Activated naive CD4-positive, alpha-beta T cell treated with anti-CD3 and anti-CD28 coated beads for 36 hours (primary cell): ENCODE measurements at regions of chr3 and their contacts with region 1.

Region 1: GRCh38 chr3:59935025-59935424 is 885.2 kb upstream of the CFAP20DC start:
- DNase-seq: peak; percentile 53
- H3K4me3 Mint-ChIP-seq: peak overlapping the region; percentile 50
- H3K27ac Mint-ChIP-seq: peak overlapping the region; percentile 78
- H3K4me1 Mint-ChIP-seq: peaks cover 89% of the 10 kb centered on the region
- H3K27me3 Mint-ChIP-seq: no peaks in the 10 kb centered on the region

Region 2: DNA sequence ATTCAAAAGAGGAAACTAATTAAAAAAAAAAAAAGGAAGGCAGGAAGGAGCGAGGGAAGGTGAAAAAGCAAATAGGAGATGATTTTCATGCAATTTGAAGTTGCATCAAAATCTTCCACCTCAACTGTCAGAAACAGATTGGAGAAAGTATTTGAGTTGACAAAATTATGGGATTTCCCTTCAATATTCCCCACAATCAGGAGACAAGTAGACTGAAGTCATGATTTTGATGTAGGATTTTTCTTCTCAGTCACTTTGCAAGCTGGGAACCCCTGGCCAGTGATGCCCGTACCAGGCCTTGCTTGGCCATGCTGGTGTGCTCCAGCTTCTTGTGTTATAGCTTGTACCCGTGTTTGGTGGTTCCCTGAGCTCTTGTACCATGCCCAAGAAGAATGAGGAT is 30.7 kb before region 1 on chr3:
- CTCF ChIA-PET with region 1: no interaction called
- intact Hi-C with region 1: loop called (anchors 2 kb)
- DNase-seq: no peak
- H3K4me3 Mint-ChIP-seq: no peak overlapping the region
- H3K27ac Mint-ChIP-seq: peak overlapping the region; percentile 63
- H3K4me1 Mint-ChIP-seq: peaks cover 62% of the 10 kb centered on the region
- H3K27me3 Mint-ChIP-seq: no peaks in the 10 kb centered on the region

Region 3: GRCh38 chr3:59992578-59992977 is 57.6 kb after region 1 on chr3:
- CTCF ChIA-PET with region 1: no interaction called
- intact Hi-C with region 1: loop called (anchors 1 kb)
- DNase-seq: peak; percentile 76
- H3K4me3 Mint-ChIP-seq: peak overlapping the region; percentile 43
- H3K27ac Mint-ChIP-seq: peak overlapping the region; percentile 84
- H3K4me1 Mint-ChIP-seq: peaks cover 96% of the 10 kb centered on the region
- H3K27me3 Mint-ChIP-seq: no peaks in the 10 kb centered on the region

Region 4: GRCh38 chr3:60017631-60018030 is 82.6 kb after region 1 on chr3:
- CTCF ChIA-PET with region 1: interaction called, 3 read pairs
- intact Hi-C with region 1: loop called (anchors 1 kb)
- DNase-seq: peak; percentile 86
- H3K4me3 Mint-ChIP-seq: peak overlapping the region; percentile 74
- H3K27ac Mint-ChIP-seq: peak overlapping the region; percentile 100
- H3K4me1 Mint-ChIP-seq: peaks cover 82% of the 10 kb centered on the region
- H3K27me3 Mint-ChIP-seq: no peaks in the 10 kb centered on the region

Region 5: GRCh38 chr3:61251174-61251972 is 1316.3 kb after region 1 on chr3 and contains the start of gene FHIT:
- CTCF ChIA-PET with region 1: no interaction called
- intact Hi-C with region 1: loop called (anchors 10 kb)
- DNase-seq: peak; percentile 96
- H3K4me3 Mint-ChIP-seq: peak within 1 kb of the TSS; percentile 91
- H3K27ac Mint-ChIP-seq: peak within 1 kb of the TSS; percentile 87
- H3K4me1 Mint-ChIP-seq: peaks cover 11% of the 10 kb centered on the region
- H3K27me3 Mint-ChIP-seq: peaks cover under 1% of the 10 kb centered on the region
- total RNA-seq, gene FHIT: 20.2 to 22.7 TPM